Activated CD8-positive, alpha-beta T cell treated with anti-CD3 and anti-CD28 coated beads, Interleukin-2, amount 10 ng/mL, durations not matched to agents 7 days and 5 days (primary cell): ENCODE measurements at regions of chr15 and their contacts with region 1.

Region 1: DNA sequence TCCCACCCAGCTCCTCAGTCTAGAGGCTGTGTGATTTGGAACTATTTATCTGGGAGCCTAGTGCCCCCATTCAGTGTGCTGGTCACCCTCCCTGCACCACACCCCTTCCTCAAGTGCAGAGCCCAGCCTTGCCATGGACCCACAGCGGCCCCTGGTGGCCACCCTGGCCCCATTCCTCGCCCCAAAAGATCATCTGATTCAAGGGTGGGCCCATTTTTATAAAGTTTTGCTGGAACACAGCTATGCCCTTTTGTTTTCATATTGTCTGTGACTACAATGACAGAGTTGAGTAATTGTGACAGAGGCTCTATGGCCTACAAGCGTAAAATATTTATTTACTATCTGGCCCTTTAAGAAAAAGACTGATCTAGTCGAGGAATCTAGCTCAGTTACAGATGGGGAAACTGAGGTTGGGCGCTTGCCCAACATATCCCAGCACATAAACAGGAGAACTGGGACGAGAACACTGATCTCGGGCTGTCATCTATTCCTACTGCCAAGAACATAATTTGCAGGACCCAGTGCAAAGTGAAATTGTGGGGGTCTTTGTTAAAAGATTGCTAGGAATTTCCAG is 1.8 kb downstream of the FES start:
- DNase-seq: peak; percentile 86
- ATAC-seq: peak; percentile 76
- H3K4me3 Mint-ChIP-seq: peak overlapping the region; percentile 52
- H3K27ac Mint-ChIP-seq: peak overlapping the region; percentile 79
- H3K4me1 Mint-ChIP-seq: peaks cover 42% of the 10 kb centered on the region
- H3K27me3 Mint-ChIP-seq: no peaks in the 10 kb centered on the region

Region 2: DNA sequence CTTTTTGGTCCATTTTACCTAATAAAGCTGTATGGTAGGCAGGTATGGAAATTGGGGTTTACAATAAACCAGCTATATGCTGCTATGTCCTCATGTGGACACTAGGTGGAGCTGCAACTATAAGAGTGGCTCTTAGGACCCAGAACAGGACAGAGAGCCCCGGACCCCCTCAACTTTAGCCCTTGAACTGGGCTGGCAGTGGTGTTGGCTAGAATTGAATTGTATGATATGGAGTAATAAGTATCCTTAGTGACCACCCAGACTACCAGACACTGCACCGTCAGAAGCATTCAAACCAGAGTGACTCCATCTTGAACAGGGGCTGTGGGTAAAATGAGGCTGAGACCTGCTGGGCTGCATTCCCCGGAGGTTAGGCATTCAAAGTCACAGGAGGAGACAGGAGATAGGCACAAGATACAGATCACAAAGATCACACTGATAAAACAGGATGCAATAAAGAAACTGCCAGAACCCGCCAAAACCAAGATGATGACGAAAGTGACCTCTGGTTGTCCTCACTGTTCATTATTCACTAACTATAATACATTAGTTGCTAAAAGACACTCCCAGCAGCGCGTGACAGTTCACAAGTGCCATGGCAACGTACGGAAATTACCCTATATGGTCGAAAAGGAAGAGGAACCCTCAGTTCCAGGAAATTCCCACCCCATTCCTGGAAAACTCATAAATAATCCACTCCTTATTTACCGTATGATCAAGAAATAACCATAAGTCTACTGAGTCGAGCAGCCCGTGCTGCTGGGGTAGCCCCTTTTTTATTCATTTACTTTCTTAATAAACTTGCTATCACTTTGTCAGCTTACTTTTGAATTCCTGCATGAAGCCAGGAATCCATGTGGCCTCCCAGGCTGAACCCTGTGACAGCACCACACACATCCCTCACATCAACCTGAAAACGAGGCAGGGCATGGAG is 237.7 kb before region 1 on chr15:
- CTCF ChIA-PET with region 1: interaction called, 18 read pairs
- POLR2A ChIA-PET with region 1: interaction called, 3 read pairs
- DNase-seq: peak; percentile 89
- ATAC-seq: peak; percentile 80
- H3K4me3 Mint-ChIP-seq: peak overlapping the region; percentile 64
- H3K27ac Mint-ChIP-seq: peak overlapping the region; percentile 99
- H3K4me1 Mint-ChIP-seq: peaks cover 51% of the 10 kb centered on the region
- H3K27me3 Mint-ChIP-seq: no peaks in the 10 kb centered on the region

Region 3: GRCh38 chr15:90716976-90717821 is 168.9 kb before region 1 on chr15 and contains the start of gene BLM:
- CTCF ChIA-PET with region 1: interaction called, 34 read pairs
- POLR2A ChIA-PET with region 1: interaction called, 10 read pairs
- DNase-seq: peak; percentile 97
- ATAC-seq: peak; percentile 99
- H3K4me3 Mint-ChIP-seq: peak within 1 kb of the TSS; percentile 81
- H3K27ac Mint-ChIP-seq: peak within 1 kb of the TSS; percentile 94
- H3K4me1 Mint-ChIP-seq: peaks cover 25% of the 10 kb centered on the region
- H3K27me3 Mint-ChIP-seq: no peaks in the 10 kb centered on the region
- total RNA-seq, gene BLM: 52.3 to 57.4 TPM

Region 4: DNA sequence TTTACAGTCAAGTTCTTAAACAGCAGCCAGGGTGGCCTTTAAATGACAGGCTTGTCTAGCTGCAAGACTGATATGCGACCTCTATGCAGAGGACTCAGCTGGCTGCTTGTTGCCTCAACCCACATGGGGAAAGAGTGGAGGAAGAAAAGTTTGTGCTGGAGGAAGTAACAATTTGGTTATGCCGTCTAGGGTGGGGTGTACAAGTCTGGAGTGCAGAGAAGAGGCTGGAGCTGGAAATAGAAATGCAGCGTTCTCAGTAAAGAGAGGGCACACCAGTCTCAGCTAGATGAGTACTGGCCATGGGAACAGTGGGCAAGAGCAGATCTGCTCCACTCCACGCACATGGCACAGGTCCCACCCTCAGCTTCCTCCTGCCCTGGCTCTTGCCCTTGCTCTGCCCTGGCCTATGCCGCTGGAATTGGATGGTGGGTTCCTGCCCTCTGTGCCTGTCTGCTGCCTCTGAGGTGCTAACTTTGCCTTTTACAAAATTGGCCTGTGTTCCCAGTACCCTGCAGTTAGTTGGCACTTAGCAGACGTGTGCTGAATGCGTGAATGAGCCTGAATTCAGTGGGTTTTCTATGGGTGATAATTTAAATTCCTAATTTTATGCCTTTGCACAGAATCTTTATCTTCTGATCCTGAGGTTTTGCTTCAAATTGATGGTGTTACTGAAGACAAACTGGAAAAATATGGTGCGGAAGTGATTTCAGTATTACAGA is 77.5 kb before region 1 on chr15:
- CTCF ChIA-PET with region 1: interaction called, 50 read pairs
- POLR2A ChIA-PET with region 1: no interaction called
- DNase-seq: no peak
- ATAC-seq: no peak
- H3K4me3 Mint-ChIP-seq: no peak overlapping the region
- H3K27ac Mint-ChIP-seq: peak overlapping the region; percentile 39
- H3K4me1 Mint-ChIP-seq: peaks cover 66% of the 10 kb centered on the region
- H3K27me3 Mint-ChIP-seq: no peaks in the 10 kb centered on the region

Region 5: DNA sequence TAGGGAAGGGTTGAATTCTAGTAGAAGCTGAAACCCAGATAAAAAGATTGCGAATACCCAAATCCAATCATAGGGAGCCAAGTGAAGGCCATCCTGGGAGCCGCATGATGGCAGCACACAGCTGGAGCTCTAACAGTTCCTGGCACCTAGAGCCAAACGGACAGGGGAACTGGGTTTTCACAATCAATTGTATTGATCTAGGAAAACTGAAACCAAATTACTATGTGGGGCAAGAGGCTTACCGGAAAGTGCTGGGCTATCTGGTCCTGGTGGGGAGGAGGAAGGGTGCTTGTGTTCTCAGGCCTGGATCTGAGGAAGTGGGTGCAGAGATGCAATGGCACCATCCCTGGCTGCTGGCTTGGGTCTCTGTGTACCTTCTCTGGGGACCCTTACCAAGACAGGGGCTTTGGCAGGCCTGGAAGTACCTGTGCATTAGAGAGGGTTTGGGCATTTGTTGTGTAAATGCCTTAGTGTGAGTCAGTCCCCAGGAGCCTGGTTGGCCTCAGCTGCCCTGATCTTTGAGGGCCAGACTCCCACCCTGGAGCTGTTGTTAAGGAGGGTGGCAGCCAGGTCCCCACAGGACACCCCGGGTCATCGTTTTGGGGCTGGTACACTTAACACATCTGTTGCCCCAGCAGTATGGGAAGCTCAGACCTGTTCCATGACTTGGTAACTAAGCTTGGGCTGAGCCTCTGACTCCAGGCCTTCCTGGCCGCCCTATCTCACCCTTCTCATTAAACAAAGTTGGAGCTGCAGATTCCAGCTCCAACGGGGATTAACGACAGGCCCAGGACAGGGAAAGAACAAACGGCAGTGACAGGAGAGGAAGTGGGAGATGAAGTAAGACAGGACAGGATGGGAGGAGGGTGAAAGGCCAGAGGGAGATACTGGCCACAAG is 26.6 kb before region 1 on chr15:
- CTCF ChIA-PET with region 1: no interaction called
- POLR2A ChIA-PET with region 1: no interaction called
- DNase-seq: no peak
- ATAC-seq: no peak
- H3K4me3 Mint-ChIP-seq: no peak overlapping the region
- H3K27ac Mint-ChIP-seq: peak overlapping the region; percentile 21
- H3K4me1 Mint-ChIP-seq: peaks cover 58% of the 10 kb centered on the region
- H3K27me3 Mint-ChIP-seq: no peaks in the 10 kb centered on the region

Region 6: GRCh38 chr15:90869601-90870353 is 16.4 kb before region 1 on chr15:
- CTCF ChIA-PET with region 1: interaction called, 18 read pairs
- POLR2A ChIA-PET with region 1: interaction called, 7 read pairs
- DNase-seq: peak; percentile 54
- ATAC-seq: peak; percentile 37
- H3K4me3 Mint-ChIP-seq: peak overlapping the region; percentile 89
- H3K27ac Mint-ChIP-seq: peak overlapping the region; percentile 94
- H3K4me1 Mint-ChIP-seq: peaks cover 56% of the 10 kb centered on the region
- H3K27me3 Mint-ChIP-seq: no peaks in the 10 kb centered on the region